ENCODE measurements at regions of chrX and their contacts with region 1.

Region 1: DNA sequence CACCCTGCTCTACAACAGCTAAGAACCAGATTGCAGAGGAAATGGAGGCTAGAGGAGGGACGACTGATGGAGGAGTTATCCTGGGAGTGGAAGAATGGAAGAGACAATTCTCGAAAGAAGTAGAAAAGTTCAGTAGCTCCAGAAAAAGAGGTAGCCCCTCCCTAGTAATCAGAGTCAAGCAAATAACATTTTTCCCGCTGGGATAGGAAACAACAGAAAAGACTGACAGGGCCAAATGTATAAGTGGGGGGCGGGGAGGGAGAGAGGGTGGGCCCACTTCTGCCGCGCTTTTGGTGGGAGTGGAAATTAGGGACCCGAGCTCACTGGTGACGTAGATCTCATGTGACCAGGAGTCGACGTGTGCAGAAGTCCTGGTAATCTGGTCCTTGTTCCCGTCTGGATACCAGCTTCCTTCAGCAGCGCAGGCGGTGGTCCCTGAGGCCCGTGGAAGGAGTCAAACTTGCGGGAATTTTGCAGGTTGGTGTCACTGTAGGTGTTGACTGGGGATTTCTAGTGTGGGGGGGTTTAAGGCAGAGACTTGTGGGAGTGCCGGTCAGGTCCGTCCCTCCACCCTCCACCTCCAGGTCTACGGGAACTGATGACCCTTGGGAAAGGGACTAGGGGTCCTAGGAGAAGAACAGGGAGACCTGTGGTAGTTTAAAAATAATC is at the start of gene TCEAL9:
- DNase-seq: peak; percentile 54 to 77
- H3K4me3 ChIP-seq: peak within 1 kb of the TSS; percentile 70 to 81
- H3K27ac ChIP-seq: peak within 1 kb of the TSS; percentile 94
- H3K4me1 ChIP-seq: no peaks in the 10 kb centered on the region
- H3K27me3 ChIP-seq: no peaks in the 10 kb centered on the region
- CTCF ChIP-seq: no peak

Region 2: GRCh38 chrX:103233263-103233662 is 123.0 kb before region 1 on chrX:
- intact Hi-C with region 1: no loop called
- DNase-seq: no peak
- H3K4me3 ChIP-seq: no peak overlapping the region
- H3K27ac ChIP-seq: no peak overlapping the region
- H3K4me1 ChIP-seq: no peaks in the 10 kb centered on the region
- H3K27me3 ChIP-seq: no peaks in the 10 kb centered on the region
- CTCF ChIP-seq: no peak

Region 3: DNA sequence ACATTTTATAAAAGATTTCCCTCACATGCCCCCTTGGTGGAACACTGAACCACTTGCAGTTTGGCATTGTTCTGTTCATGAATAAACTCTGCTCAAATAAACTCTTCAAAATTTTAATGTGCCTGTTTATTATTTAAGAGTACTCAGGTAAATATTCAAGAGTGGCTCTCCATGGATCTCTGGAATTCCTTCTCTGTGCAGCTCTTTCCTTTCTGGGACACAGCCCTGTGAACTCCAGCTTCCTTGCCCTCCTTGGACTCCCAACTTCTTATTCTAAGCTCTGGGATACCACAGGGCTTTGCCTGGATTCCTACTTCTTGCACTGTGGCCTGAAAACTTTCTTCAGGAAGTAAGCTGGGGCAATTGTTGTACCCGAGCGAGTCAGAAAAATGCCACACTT is 28.4 kb after region 1 on chrX:
- intact Hi-C with region 1: no loop called
- DNase-seq: no peak
- H3K4me3 ChIP-seq: no peak overlapping the region
- H3K27ac ChIP-seq: no peak overlapping the region
- H3K4me1 ChIP-seq: no peaks in the 10 kb centered on the region
- H3K27me3 ChIP-seq: no peaks in the 10 kb centered on the region
- CTCF ChIP-seq: no peak

Region 4: DNA sequence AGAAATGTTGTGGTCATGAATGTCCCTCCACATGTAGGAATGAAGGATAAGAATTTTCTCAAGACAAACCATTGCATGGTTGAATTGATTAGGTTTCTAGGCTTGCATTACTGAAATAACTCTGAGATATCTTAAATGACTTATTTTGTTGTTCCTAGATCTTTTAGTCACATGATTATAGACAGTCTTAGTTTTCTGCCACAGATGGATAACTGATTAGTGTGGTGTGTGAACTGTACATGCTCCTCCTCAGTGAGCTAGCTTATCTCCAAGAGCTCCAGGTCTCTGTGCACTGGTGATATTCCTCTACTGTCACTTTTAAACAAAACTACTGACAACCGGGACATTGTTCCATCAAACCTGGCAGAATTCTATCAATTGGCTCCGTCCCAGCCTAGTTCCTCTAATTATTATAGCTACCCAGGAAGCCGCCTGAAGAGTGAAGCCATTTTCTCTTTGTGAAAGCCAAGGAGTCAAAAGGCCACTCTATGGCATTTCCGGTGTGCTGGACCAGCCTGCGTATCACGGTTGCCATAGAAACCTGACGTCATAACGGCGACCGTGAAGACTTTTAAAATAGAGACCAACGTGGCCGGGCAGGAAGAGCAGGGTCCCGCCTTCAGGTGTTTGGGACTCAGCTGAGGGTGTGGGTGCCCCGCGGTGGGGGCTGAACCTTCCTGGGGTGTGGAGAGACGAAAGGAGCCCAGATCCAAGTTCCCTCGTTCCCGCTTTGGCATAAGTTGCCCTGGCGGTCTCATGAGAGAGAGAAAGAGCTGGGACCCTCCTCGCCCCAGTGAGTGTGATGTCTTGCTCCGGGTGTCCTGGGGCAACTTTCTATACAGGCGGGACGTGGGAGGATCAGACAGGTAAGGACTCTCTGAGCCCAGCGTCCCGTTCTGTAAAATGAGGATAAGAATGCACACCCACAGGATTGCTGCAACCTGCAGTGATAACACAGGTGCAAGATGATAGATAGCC is 48.3 kb after region 1 on chrX:
- intact Hi-C with region 1: loop called (anchors 10 kb)
- DNase-seq: peak; percentile 58 to 79
- H3K4me3 ChIP-seq: peak overlapping the region; percentile 55 to 57
- H3K27ac ChIP-seq: peak overlapping the region; percentile 62 to 72
- H3K4me1 ChIP-seq: no peaks in the 10 kb centered on the region
- H3K27me3 ChIP-seq: no peaks in the 10 kb centered on the region
- CTCF ChIP-seq: no peak

Region 5: GRCh38 chrX:103464774-103465117 is 108.5 kb after region 1 on chrX:
- intact Hi-C with region 1: no loop called
- DNase-seq: peak; percentile 71 to 79
- H3K4me3 ChIP-seq: peak overlapping the region; percentile 38 to 41
- H3K27ac ChIP-seq: no peak overlapping the region
- H3K4me1 ChIP-seq: no peaks in the 10 kb centered on the region
- H3K27me3 ChIP-seq: no peaks in the 10 kb centered on the region
- CTCF ChIP-seq: peak; percentile 59 to 66

Region 6: DNA sequence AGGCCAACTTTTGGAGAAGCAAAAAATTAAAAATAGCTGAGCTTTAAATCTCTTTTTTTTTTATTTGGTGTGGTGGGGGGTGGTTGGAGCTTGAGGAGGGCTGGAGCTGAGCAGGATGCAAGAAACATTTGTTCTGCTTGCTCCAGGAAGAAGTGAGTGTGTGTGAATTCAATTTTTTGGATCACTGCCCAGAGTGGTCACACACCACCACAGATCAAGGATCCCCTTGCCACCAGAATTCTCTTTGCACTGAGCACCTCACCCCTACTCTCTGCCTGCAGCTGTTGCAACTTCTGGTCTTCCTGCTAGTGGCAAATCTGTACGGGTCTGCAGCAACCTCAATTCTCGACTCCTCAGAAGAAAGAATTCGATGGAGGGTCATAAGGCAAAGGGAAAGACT is 400.5 kb after region 1 on chrX:
- intact Hi-C with region 1: no loop called
- DNase-seq: no peak
- H3K4me3 ChIP-seq: no peak overlapping the region
- H3K27ac ChIP-seq: no peak overlapping the region
- H3K4me1 ChIP-seq: no peaks in the 10 kb centered on the region
- H3K27me3 ChIP-seq: no peaks in the 10 kb centered on the region
- CTCF ChIP-seq: no peak